WTC11 (cell line): ENCODE measurements at regions of chr9 and their contacts with region 1.

Region 1: GRCh38 chr9:95181226-95181818 is 136.2 kb downstream of the FANCC start:
- DNase-seq: no peak
- ATAC-seq: no peak
- H3K4me3 Mint-ChIP-seq: no peak overlapping the region
- H3K27ac Mint-ChIP-seq: no peak overlapping the region
- H3K4me1 Mint-ChIP-seq: peaks cover 21% of the 10 kb centered on the region
- H3K27me3 Mint-ChIP-seq: no peaks in the 10 kb centered on the region
- CTCF ChIP-seq: peak; percentile 51

Region 2: GRCh38 chr9:95268681-95269080 is 87.4 kb after region 1 on chr9:
- CTCF ChIA-PET with region 1: interaction called, 11 read pairs
- POLR2A ChIA-PET with region 1: no interaction called
- DNase-seq: peak; percentile 32
- ATAC-seq: peak; percentile 75
- H3K4me3 Mint-ChIP-seq: no peak overlapping the region
- H3K27ac Mint-ChIP-seq: no peak overlapping the region
- H3K4me1 Mint-ChIP-seq: peaks cover 32% of the 10 kb centered on the region
- H3K27me3 Mint-ChIP-seq: no peaks in the 10 kb centered on the region
- CTCF ChIP-seq: no peak